ENCODE measurements at regions of chr17 and their contacts with region 1.

Region 1: GRCh38 chr17:4872786-4873185 is 26.6 kb upstream of the C17orf107 start:
- DNase-seq: no peak
- ATAC-seq: no peak
- H3K4me3 ChIP-seq: no peak overlapping the region
- H3K4me3 Mint-ChIP-seq: no peak overlapping the region
- H3K27ac ChIP-seq: no peak overlapping the region
- H3K27ac Mint-ChIP-seq: no peak overlapping the region
- H3K4me1 ChIP-seq: no peaks in the 10 kb centered on the region
- H3K4me1 Mint-ChIP-seq: no peaks in the 10 kb centered on the region
- H3K27me3 ChIP-seq: no peaks in the 10 kb centered on the region
- H3K27me3 Mint-ChIP-seq: no peaks in the 10 kb centered on the region
- CTCF ChIP-seq: no peak

Region 2: DNA sequence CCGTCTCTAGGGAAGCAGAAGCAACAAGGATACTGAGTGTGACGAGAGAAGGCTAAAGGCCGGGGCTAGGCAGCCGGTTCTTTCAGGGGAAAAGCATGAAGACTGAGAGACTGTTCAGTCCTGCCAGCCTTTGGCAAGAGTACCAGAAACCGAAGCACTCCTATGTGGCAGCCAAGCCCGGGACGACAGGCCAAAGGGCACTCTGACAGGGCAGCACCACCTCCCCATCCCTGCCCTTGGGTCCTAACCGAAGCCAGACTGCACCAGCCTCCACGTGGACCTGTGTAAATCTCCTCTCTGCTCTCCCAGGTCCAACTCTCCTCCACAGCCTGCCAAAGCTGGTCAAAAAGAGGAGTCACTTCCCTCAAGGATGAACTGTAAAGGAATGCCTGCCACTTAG is 207.8 kb before region 1 on chr17:
- CTCF ChIA-PET with region 1: no interaction called
- POLR2A ChIA-PET with region 1: no interaction called
- intact Hi-C with region 1: no loop called
- DNase-seq: no peak
- ATAC-seq: no peak
- H3K4me3 ChIP-seq: no peak overlapping the region
- H3K4me3 Mint-ChIP-seq: no peak overlapping the region
- H3K27ac ChIP-seq: no peak overlapping the region
- H3K27ac Mint-ChIP-seq: no peak overlapping the region
- H3K4me1 ChIP-seq: no peaks in the 10 kb centered on the region
- H3K4me1 Mint-ChIP-seq: no peaks in the 10 kb centered on the region
- H3K27me3 ChIP-seq: no peaks in the 10 kb centered on the region
- H3K27me3 Mint-ChIP-seq: no peaks in the 10 kb centered on the region
- CTCF ChIP-seq: no peak

Region 3: GRCh38 chr17:4815043-4815675 is 57.6 kb before region 1 on chr17:
- CTCF ChIA-PET with region 1: no interaction called
- POLR2A ChIA-PET with region 1: no interaction called
- intact Hi-C with region 1: loop called in 1 of 2 experiments (anchors 5 kb)
- DNase-seq: no peak
- ATAC-seq: no peak
- H3K4me3 ChIP-seq: no peak overlapping the region
- H3K4me3 Mint-ChIP-seq: no peak overlapping the region
- H3K27ac ChIP-seq: no peak overlapping the region
- H3K27ac Mint-ChIP-seq: no peak overlapping the region
- H3K4me1 ChIP-seq: no peaks in the 10 kb centered on the region
- H3K4me1 Mint-ChIP-seq: no peaks in the 10 kb centered on the region
- H3K27me3 ChIP-seq: no peaks in the 10 kb centered on the region
- H3K27me3 Mint-ChIP-seq: no peaks in the 10 kb centered on the region
- CTCF ChIP-seq: no peak

Measured in CD8-positive, alpha-beta T cell (primary cell).